ENCODE measurements at regions of chr6 and their contacts with region 1.

Region 1: GRCh38 chr6:55960344-55960743 is 85.0 kb upstream of the BMP5 start:
- DNase-seq: no peak
- ATAC-seq: no peak
- H3K4me3 ChIP-seq: no peak overlapping the region
- H3K27ac ChIP-seq: no peak overlapping the region
- H3K4me1 ChIP-seq: peaks cover 0 to 7% (median 0%) of the 10 kb centered on the region in 9 donors
- H3K27me3 ChIP-seq: no peaks in the 10 kb centered on the region
- CTCF ChIP-seq: no peak

Region 2: GRCh38 chr6:55980627-55981211 is 20.4 kb after region 1 on chr6:
- intact Hi-C with region 1: loop called in 1 of 10 experiments (anchors 1 kb)
- DNase-seq: peak in 1 of 2 donors; percentile 17
- ATAC-seq: peak in 1 of 8 donors; percentile 47
- H3K4me3 ChIP-seq: no peak overlapping the region
- H3K27ac ChIP-seq: no peak overlapping the region
- H3K4me1 ChIP-seq: no peaks in the 10 kb centered on the region
- H3K27me3 ChIP-seq: no peaks in the 10 kb centered on the region
- CTCF ChIP-seq: peak; percentile 47 to 83 (median 73)

Measured in heart right ventricle (tissue), 16 donors.